CD4-positive, alpha-beta memory T cell (primary cell): ENCODE measurements at regions of chr10 and their contacts with region 1.

Region 1: DNA sequence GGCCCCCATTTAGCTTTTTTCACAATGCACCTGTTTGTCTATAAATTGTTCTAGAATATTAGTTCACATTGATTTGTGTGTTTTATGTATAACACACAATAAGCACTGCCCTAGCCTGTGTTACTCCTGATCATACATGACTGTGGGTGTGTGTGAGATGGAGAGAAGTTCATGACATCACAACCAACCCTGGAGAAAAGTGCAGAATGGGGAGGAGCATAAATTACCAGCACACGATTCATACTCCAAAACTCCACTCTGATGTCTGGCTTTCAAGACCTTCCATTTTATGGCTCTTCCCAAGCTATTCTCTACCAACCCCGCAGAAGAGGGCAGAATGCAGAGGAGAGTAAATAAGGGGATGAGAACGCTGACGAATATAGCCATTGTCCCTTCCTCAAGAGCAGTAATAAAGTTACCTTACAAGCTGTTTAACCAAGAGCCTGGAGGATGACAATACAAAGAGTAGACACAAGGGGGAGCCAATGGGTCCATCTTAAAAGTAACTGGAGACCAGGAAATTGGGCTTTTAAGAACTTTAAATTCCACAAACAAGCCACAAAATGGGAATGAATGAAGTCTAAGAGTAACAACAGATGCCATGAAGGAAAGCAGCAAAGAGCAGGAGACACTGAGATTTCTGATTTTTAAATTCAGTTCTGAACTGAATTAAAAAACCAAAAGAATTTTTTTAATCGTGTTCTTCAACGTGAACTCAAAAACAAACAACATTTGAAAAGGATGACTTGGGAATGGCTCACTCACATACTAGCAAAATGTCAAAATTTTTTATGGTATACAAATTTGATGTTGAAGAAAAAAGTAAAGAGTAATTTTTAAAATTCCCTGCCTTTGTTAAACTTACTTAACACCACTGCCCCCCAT is 159.6 kb downstream of the PARD3 start:
- DNase-seq: peak in 3 of 5 donors; percentile 8 to 17 (median 9)
- H3K4me3 ChIP-seq: no peak overlapping the region
- H3K4me3 Mint-ChIP-seq: no peak overlapping the region
- H3K27ac ChIP-seq: no peak overlapping the region
- H3K27ac Mint-ChIP-seq: no peak overlapping the region
- H3K4me1 ChIP-seq: no peaks in the 10 kb centered on the region
- H3K4me1 Mint-ChIP-seq: no peaks in the 10 kb centered on the region
- H3K27me3 ChIP-seq: no peaks in the 10 kb centered on the region
- H3K27me3 Mint-ChIP-seq: peaks cover 4% of the 10 kb centered on the region in 2 donors

Region 2: DNA sequence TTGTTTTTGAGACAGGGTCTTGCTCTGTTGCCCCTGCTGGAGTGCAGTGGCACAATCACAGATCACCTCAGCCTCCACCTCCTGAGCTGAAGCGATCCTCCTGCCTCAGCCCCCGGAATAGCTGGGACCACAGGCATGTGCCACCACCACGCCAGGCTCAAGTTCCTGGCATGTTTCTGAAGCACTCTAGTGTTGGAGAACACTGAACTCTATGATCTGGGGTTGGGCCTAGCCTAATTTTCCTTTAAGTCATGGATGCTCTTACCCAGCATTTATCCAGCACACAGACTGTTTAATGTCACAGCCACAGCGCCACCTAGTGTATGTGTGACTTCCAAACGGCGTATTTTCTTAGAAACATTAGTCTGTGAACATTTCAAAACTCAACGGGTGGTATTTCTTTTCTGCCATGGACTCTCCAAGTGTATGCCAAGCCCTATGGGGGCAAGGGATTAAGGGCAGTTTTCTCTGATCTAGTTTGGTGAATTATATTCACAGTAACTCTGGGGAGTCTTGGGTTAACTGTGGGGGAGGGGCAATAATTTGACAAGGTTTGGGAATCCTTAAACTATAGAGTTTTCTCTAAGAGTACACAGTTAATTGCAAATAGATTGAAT is 562.9 kb after region 1 on chr10:
- CTCF ChIA-PET with region 1: no interaction called
- POLR2A ChIA-PET with region 1: no interaction called
- intact Hi-C with region 1: loop called (anchors 10 kb)
- DNase-seq: peak; percentile 78 to 85 (median 79)
- H3K4me3 ChIP-seq: no peak overlapping the region
- H3K4me3 Mint-ChIP-seq: peak overlapping the region in 6 of 8 donors; percentile 41 to 73 (median 69)
- H3K27ac ChIP-seq: no peak overlapping the region
- H3K27ac Mint-ChIP-seq: peak overlapping the region; percentile 7 to 94 (median 92)
- H3K4me1 ChIP-seq: peaks cover 9% of the 10 kb centered on the region
- H3K4me1 Mint-ChIP-seq: peaks cover 6 to 8% (median 7%) of the 10 kb centered on the region in 4 donors
- H3K27me3 ChIP-seq: no peaks in the 10 kb centered on the region
- H3K27me3 Mint-ChIP-seq: peaks cover 0 to 16% of the 10 kb centered on the region in 2 donors